GM12878 (cell line): ENCODE measurements at regions of chr14 and their contacts with region 1.

Region 1: GRCh38 chr14:30656190-30656632 is 34.1 kb downstream of the SCFD1 start:
- DNase-seq: peak; percentile 4
- ATAC-seq: peak; percentile 75
- H3K4me3 ChIP-seq: no peak overlapping the region
- H3K27ac ChIP-seq: no peak overlapping the region
- H3K4me1 ChIP-seq: no peaks in the 10 kb centered on the region
- H3K27me3 ChIP-seq: no peaks in the 10 kb centered on the region
- CTCF ChIP-seq: peak; percentile 58 to 72 (median 69)
- EP300 ChIP-seq: no peak
- POLR2A ChIP-seq: no peak
- RAD21 ChIP-seq: peak; percentile 58

Region 2: DNA sequence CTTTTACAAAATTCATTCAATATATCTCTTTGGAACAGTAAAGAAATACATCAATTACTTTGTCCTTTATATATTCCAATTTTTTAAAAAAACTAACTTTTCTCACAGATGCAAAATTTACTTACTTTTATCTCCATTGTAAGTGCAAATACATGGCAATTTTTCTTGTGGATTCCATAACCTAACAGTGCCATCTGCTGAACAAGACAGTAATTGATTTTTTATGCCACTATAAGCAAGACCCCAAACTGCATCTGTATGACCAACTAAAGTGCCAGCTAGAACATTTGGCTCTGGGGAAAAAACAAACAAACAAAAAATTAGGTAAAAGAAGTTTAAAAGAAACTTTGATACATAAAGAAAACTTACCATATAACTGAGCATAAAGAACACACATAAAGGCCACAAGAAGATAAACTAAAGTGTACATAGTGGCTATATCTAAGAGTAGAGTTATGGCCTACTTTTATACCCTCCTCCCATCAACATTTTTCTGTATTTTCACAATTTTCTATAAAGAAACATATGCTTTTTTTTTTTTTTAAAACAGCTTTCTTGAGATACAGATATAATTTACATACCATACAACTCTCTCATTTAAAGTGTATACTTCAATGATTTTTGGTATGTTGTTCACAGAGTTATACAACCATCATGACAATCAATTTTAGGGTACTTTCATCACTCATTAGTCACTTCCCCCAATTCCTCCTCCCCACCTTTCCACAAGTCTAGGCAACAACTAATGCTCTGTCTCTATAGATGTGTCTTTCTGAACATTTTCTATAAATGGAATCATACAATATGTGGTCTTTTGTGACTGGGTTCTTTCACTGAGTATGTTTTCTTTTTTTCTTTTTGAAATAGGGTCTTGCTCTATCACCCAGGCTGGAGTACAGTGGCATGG is 250.8 kb after region 1 on chr14:
- CTCF ChIA-PET with region 1: interaction called, 15 read pairs
- POLR2A ChIA-PET with region 1: no interaction called
- RAD21 ChIA-PET with region 1: interaction called, 6 read pairs
- SMC1A ChIA-PET with region 1: interaction called, 3 read pairs
- in situ Hi-C with region 1: loop called (anchors 5 kb)
- intact Hi-C with region 1: loop called (anchors 1 kb)
- DNase-seq: no peak
- ATAC-seq: peak; percentile 66
- H3K4me3 ChIP-seq: no peak overlapping the region
- H3K27ac ChIP-seq: no peak overlapping the region
- H3K4me1 ChIP-seq: no peaks in the 10 kb centered on the region
- H3K27me3 ChIP-seq: no peaks in the 10 kb centered on the region
- CTCF ChIP-seq: peak; percentile 33 to 59 (median 41); a peak in 4 of 6 replicates
- EP300 ChIP-seq: no peak
- POLR2A ChIP-seq: no peak
- RAD21 ChIP-seq: peak; percentile 75